CD14-positive monocyte (primary cell): ENCODE measurements at regions of chr18 and their contacts with region 1.

Region 1: DNA sequence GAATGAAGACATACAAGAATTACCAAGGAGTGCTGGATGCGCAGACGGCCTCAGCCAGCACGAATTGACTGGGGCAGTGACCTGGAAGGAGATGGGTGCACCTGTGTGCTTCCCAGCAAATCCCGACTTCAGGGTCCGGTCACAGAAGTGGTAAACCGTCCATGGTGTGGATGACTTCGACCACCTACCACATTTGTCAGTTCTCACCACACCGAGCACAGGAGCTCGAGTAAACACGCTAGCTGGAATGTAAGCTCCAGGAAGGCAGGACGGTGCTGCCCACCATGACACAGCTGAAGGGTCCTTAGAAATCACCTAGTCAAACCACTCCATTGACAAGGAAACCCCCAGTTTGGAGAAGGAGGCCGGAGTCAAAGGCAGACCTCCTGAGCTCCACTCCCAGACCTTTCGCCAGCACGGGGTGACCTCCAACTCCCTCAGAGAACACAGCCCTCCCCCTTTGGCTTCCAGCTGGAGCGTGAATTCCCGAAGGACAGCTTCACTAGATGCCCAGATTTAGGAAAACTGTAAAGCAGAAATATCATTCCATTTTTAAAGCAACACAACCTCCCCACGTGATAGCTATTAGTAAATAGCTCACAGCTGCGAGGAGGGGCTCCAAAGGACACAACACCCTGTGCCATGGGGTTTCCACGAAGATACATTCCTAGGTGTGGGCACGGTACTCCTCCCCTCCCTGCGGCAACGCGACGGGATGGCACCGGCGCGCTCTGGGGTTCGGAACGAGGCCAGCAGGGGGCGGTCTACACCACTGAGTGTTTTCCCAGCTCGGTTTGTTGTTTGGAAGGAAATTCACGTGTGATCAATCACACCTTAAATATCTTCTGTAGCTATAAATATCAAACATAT is 34.1 kb upstream of the GNAL start:
- DNase-seq: peak; percentile 4 to 15 (median 4)
- H3K4me3 ChIP-seq: no peak overlapping the region
- H3K4me3 Mint-ChIP-seq: peak overlapping the region in 1 of 2 donors; percentile 35
- H3K27ac ChIP-seq: no peak overlapping the region
- H3K27ac Mint-ChIP-seq: no peak overlapping the region
- H3K4me1 ChIP-seq: no peaks in the 10 kb centered on the region
- H3K4me1 Mint-ChIP-seq: peaks cover 4% of the 10 kb centered on the region
- H3K27me3 ChIP-seq: peaks cover 0 to 3% of the 10 kb centered on the region in 2 donors
- H3K27me3 Mint-ChIP-seq: peaks cover 10 to 36% (median 16%) of the 10 kb centered on the region in 3 donors
- CTCF ChIP-seq: peak; percentile 81

Region 2: DNA sequence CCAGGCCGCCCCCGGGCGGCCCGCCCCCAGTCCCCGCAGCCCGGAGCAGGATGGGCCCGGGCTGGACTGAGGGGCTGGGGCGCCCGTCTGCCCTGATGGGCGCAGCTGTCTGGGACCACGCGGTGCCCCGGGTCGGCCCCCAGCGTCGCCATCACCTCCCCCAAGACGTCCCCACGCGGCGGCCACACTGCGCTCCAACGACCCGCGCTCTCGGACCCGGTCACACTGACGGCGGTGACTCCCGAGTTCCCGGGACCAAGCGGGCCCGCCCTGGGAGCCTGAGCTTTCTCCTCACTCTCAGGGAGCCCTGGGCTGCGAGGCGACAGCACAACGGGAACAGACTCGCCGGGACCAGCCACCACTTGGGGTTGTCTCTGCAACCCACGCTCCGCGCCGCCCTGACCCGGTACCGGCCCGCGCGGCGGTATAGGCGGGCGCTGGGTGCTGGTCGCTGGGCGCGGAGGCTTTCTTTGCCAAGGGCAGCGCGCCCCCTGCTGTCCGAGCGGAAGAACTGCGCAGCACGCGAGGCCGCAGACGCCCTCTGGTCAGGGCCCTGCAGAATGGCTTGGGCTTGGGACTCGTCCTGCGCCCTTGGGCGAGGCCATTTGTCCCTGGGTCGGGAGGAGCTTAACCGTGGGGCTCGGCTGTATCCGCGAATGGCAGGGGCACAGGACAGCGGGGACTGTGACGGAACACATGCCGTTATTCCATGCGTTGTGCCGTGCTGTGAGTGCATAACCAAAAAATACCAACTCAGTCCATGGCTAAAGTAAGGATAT is 383.9 kb after region 1 on chr18:
- intact Hi-C with region 1: loop called (anchors 10 kb)
- DNase-seq: peak; percentile 71 to 79 (median 72)
- H3K4me3 ChIP-seq: peak overlapping the region; percentile 38 to 80 (median 49)
- H3K4me3 Mint-ChIP-seq: peak overlapping the region; percentile 75 to 85
- H3K27ac ChIP-seq: no peak overlapping the region
- H3K27ac Mint-ChIP-seq: peak overlapping the region in 1 of 7 donors; percentile 25
- H3K4me1 ChIP-seq: peaks cover 22 to 24% of the 10 kb centered on the region in 2 donors
- H3K4me1 Mint-ChIP-seq: peaks cover 22% of the 10 kb centered on the region
- H3K27me3 ChIP-seq: peaks cover 0 to 6% of the 10 kb centered on the region in 2 donors
- H3K27me3 Mint-ChIP-seq: peaks cover 5 to 18% (median 13%) of the 10 kb centered on the region in 3 donors
- CTCF ChIP-seq: peak; percentile 98

Region 3: DNA sequence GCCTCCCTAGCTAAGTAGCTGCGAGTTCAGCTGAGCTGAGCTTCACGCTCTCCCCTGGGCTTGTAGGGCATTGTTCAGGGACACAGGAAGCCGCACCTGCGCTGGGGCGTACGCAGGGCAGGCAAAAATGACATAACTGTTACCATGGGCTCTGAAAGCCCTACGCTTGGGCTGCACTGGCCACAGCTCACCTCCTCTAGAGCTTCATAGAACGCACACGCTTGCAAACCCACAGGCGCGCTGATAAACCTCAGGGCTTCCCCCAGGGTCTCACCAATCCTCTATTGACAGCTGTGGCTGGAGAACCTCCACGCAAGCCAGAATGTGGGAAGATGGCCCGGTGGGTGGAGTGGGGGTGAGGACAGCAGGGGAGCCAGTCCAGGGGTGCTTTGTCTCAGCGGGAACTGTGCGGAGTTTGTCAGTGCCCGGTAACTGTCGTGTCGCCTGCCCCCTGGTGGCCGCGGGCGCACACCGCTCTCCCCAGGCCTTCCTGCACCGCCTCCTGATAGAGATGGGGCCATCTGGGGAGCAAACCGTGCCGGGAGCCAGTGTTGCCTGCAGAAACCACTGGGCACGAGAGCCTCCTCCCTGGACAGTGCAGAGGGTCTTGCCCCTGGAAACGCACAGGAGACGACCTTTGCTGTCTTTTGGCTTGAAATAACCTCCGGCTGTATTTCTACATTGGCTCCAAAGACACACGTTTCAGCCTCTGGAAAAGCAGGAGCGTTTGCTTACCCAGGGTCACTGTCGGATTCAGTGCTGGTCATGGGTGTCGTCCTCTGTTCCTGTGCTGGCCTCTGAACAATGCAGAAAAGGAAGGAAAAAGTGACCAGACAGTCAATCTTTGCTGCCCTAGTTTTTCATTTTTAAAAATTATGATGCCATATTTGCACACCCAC is 582.2 kb after region 1 on chr18:
- intact Hi-C with region 1: loop called (anchors 5 kb)
- DNase-seq: peak; percentile 33 to 49 (median 40)
- H3K4me3 ChIP-seq: no peak overlapping the region
- H3K4me3 Mint-ChIP-seq: no peak overlapping the region
- H3K27ac ChIP-seq: no peak overlapping the region
- H3K27ac Mint-ChIP-seq: peak overlapping the region in 1 of 7 donors; percentile 57
- H3K4me1 ChIP-seq: no peaks in the 10 kb centered on the region
- H3K4me1 Mint-ChIP-seq: peaks cover 3% of the 10 kb centered on the region
- H3K27me3 ChIP-seq: no peaks in the 10 kb centered on the region
- H3K27me3 Mint-ChIP-seq: peaks cover 3 to 19% (median 16%) of the 10 kb centered on the region in 3 donors
- CTCF ChIP-seq: peak; percentile 92